Activated T-helper 1 cell treated with anti-CD3 and anti-CD28 coated beads, Interleukin-12 subunit alpha, Interleukin-12 subunit beta, Interleukin-2, Interleukin-4 antibody, amounts not matched to agents 30 ng/mL and 10 ng/mL and 1 ng/mL, durations not matched to agents 14 hours and 24 hours and 36 hours (primary cell): ENCODE measurements at regions of chr2 and their contacts with region 1.

Region 1: DNA sequence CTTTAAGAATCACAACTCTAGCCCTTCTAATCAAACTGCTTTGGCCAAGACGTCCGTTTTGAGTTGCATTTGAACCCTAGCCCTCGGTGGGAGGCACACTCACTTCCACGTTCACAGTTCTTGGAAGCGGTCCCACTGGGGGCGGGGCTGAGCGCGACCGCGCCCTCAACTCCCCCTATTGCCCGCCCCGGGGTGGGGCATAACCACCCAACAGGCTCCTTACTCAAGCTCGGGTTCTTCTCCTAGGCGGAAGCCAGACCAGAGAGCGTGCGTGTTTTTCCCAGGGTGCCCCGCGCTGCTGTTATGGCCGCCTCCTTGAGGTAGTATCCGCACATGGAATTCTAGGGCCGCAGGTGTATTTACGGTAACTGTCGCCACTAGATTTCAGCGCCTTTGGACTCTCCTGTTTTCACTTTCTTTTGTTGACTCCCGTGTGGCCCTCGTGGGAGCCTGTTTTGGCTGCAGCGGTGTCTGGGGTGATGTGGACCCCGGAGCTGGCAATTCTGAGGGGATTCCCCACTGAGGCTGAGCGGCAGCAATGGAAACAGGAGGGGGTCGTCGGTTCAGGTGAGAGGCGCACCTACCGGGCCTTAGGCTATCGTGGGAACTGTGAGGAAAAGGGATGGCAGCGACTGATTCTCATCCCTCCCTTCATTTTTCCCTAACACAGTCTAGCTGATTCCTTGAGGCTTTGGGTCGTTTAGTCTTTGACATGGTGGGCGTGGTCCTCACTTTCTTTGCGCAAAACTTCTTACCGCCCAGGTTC is at the start of gene TTC27:
- DNase-seq: peak; percentile 93
- H3K4me3 Mint-ChIP-seq: peak within 1 kb of the TSS; percentile 94
- H3K27ac Mint-ChIP-seq: peak within 1 kb of the TSS; percentile 91
- H3K4me1 Mint-ChIP-seq: peaks cover 26% of the 10 kb centered on the region
- H3K27me3 Mint-ChIP-seq: no peaks in the 10 kb centered on the region
- total RNA-seq, gene TTC27: 41.3 and 42.3 TPM in 2 replicates

Region 2: GRCh38 chr2:32010670-32011484 is 617.1 kb before region 1 on chr2 and contains the start of gene MEMO1:
- intact Hi-C with region 1: loop called (anchors 1 kb)
- DNase-seq: peak; percentile 89
- H3K4me3 Mint-ChIP-seq: peak within 1 kb of the TSS; percentile 92
- H3K27ac Mint-ChIP-seq: peak within 1 kb of the TSS; percentile 97
- H3K4me1 Mint-ChIP-seq: peaks cover 41% of the 10 kb centered on the region
- H3K27me3 Mint-ChIP-seq: no peaks in the 10 kb centered on the region
- total RNA-seq, gene MEMO1: 66.6 and 71.3 TPM in 2 replicates

Region 3: DNA sequence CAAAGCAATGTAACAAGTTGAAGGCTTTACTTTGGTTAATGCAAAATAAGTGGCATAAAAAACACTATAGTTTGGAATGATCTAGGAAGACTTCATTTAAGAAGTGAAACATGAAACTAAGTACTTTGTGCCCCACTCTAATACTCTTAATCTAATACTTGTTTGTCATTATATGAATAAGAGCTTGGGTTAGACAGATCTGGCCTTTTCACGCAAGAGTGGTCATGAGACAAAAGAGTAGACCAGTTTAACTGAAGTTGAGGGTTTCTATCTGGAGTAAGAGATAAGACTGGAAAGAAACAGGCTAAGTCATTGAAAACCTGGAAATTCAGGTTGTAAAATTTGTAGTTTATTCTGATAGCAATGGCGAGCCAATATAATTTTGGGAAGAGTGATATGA is 459.5 kb before region 1 on chr2:
- intact Hi-C with region 1: loop called (anchors 1 kb)
- DNase-seq: no peak
- H3K4me3 Mint-ChIP-seq: no peak overlapping the region
- H3K27ac Mint-ChIP-seq: no peak overlapping the region
- H3K4me1 Mint-ChIP-seq: peaks cover 44% of the 10 kb centered on the region
- H3K27me3 Mint-ChIP-seq: no peaks in the 10 kb centered on the region

Region 4: GRCh38 chr2:32553829-32554432 is 74.1 kb before region 1 on chr2:
- intact Hi-C with region 1: loop called (anchors 1 kb)
- DNase-seq: no peak
- H3K4me3 Mint-ChIP-seq: no peak overlapping the region
- H3K27ac Mint-ChIP-seq: no peak overlapping the region
- H3K4me1 Mint-ChIP-seq: no peaks in the 10 kb centered on the region
- H3K27me3 Mint-ChIP-seq: no peaks in the 10 kb centered on the region

Region 5: DNA sequence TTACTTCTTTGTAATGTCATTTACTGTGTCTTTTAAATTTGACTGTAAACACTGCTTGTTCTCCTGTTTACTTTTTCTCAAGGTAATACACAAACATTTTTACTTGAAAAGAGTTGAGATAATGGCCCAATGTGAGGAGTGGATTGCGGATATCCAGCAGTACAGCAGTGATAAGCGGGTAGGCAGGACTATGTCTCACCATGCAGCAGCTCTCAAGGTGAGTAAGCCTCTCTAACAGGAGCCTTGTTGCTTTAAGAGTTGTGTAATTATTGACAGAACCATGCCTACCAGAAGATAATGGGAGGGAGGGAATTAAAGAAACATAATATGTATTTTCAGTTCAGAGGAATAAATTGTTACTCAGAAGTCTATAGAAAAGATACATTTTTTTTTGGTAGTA is 16.6 kb before region 1 on chr2:
- intact Hi-C with region 1: no loop called
- DNase-seq: no peak
- H3K4me3 Mint-ChIP-seq: no peak overlapping the region
- H3K27ac Mint-ChIP-seq: no peak overlapping the region
- H3K4me1 Mint-ChIP-seq: no peaks in the 10 kb centered on the region
- H3K27me3 Mint-ChIP-seq: no peaks in the 10 kb centered on the region

Region 6: GRCh38 chr2:32946314-32947075 is 318.5 kb after region 1 on chr2 and contains the start of gene LTBP1:
- intact Hi-C with region 1: loop called (anchors 2 kb)
- DNase-seq: peak; percentile 68
- H3K4me3 Mint-ChIP-seq: peak within 1 kb of the TSS; percentile 84
- H3K27ac Mint-ChIP-seq: no peak within 1 kb of the TSS
- H3K4me1 Mint-ChIP-seq: peaks cover under 1% of the 10 kb centered on the region
- H3K27me3 Mint-ChIP-seq: peaks cover 30% of the 10 kb centered on the region
- total RNA-seq, gene LTBP1: 0.12 and 0.26 TPM in 2 replicates

Region 7: DNA sequence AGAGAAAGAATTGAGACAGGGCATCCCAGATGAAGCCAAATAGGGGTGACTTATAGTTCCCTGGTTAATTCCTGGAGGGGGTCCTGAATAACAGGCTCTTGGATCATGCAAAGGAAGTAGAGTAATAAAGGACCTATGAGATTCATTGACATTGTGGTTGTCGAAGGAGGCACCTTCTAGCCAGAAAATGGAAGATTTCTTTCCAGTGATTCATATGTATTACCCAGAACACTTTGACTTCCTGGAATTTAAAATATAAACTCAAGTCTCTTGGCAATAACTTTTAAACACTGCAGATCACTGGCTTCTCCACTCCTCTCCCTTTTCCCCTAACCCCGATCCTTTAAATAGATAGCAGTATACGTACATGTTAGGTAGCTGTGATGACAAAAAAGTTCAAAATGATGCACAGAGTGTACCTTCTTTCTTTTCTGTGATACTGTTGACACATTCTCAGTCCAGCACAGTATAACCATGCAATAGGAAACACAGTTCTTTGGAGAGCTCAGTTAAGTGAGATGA is 530.5 kb after region 1 on chr2:
- intact Hi-C with region 1: no loop called
- DNase-seq: no peak
- H3K4me3 Mint-ChIP-seq: no peak overlapping the region
- H3K27ac Mint-ChIP-seq: no peak overlapping the region
- H3K4me1 Mint-ChIP-seq: no peaks in the 10 kb centered on the region
- H3K27me3 Mint-ChIP-seq: no peaks in the 10 kb centered on the region

Region 8: DNA sequence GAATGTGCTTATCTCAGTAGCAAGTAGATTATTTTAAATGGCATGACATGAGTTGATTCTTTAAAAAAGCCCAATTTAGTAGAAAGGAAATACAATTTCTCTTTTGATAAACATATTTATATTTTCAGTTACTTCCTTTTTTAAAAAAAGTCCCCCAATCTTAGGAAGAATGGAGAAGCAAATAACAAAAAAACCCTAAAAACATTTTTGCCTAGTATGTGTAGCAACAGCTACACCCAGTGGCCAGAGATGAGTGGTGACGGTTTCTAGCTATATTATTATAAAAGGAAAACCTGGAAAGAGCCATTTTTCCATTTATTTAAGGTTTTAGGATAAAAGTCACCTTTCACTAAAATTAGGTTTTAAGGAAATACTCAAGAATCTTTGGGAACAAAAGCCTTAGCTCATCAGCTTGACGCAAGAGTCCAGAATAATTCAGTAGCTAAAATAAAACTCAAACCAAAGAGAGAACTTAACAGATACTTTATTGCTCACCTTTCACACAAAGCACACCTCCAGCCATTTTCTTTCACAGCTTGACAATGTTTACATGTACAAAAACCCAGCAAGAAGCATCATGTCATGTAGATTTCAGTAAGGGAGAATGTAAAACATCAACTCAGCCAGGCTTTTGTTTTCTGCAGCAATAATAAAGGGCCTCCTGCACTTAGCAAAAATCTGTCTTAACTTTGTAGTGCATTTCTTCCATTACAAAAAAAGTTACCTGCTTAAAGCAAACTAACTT is 955.4 kb after region 1 on chr2:
- intact Hi-C with region 1: loop called (anchors 5 kb)
- DNase-seq: no peak
- H3K4me3 Mint-ChIP-seq: no peak overlapping the region
- H3K27ac Mint-ChIP-seq: no peak overlapping the region
- H3K4me1 Mint-ChIP-seq: peaks cover 13% of the 10 kb centered on the region
- H3K27me3 Mint-ChIP-seq: no peaks in the 10 kb centered on the region